ENCODE measurements at regions of chr1 and their contacts with region 1.

Region 1: GRCh38 chr1:241611063-241611462 is 29.1 kb downstream of the CHML start:
- DNase-seq: no peak

Region 2: GRCh38 chr1:241292973-241293372 is 318.1 kb before region 1 on chr1:
- intact Hi-C with region 1: no loop called
- DNase-seq: no peak

Region 3: GRCh38 chr1:241658081-241658793 is 47.2 kb after region 1 on chr1:
- intact Hi-C with region 1: no loop called
- DNase-seq: no peak

Region 4: GRCh38 chr1:241834733-241835377 is 223.8 kb after region 1 on chr1:
- intact Hi-C with region 1: loop called (anchors 5 kb)
- DNase-seq: no peak